ENCODE measurements at regions of chr2 and their contacts with region 1.

Region 1: DNA sequence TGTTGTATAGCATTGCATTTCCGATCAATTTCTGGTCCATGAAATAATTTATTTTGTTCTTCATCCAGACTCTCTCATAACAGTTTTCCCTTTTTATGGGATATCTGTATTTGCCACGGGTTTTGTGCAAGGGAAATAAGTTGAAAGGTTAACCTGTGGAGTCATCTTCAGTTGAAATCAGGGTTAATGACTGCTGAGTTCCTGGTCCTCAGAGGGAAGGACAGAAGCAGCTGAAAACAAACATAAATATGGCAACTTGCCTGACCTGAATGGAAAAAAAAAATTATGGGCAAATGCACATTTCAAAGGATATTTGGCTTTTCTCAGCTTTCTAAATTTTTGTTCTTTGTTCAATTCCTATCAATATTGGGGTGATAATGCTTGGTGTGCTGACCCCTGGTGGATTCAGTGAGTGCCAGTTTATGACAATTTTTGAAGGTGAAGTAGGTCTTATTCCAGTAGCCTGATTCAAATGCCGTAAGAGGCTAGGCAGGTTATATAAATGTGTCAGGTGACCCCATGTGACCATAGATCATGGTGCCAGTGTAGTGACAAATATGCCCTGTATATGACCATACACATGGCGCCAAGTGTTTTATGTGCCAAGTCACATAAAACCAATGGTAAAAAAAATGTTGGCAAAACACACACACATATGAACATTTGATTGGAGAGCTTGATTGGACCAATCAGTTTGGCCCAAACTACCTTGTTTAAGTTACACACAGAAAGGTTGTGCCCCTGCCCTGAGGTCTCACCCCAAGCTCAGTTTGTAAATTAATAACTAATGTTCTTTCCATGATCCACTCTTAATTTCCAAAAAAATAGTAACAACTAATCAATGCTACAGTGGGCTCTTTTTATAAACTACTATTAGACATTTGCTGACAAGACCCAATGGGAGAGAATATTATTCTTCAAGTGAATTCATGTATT is 47.6 kb upstream of the FAM124B start:
- DNase-seq: peak; percentile 57 to 79 (median 75)
- H3K4me3 ChIP-seq: no peak overlapping the region
- H3K27ac ChIP-seq: no peak overlapping the region
- H3K4me1 ChIP-seq: no peaks in the 10 kb centered on the region
- H3K27me3 ChIP-seq: no peaks in the 10 kb centered on the region

Region 2: GRCh38 chr2:224357098-224357901 is 92.2 kb before region 1 on chr2:
- CTCF ChIA-PET with region 1: interaction called, 41 read pairs
- POLR2A ChIA-PET with region 1: no interaction called
- DNase-seq: peak; percentile 77 to 90 (median 82)
- H3K4me3 ChIP-seq: no peak overlapping the region
- H3K27ac ChIP-seq: no peak overlapping the region
- H3K4me1 ChIP-seq: no peaks in the 10 kb centered on the region
- H3K27me3 ChIP-seq: peaks cover 0 to 2% (median 0%) of the 10 kb centered on the region in 5 experiments

Region 3: DNA sequence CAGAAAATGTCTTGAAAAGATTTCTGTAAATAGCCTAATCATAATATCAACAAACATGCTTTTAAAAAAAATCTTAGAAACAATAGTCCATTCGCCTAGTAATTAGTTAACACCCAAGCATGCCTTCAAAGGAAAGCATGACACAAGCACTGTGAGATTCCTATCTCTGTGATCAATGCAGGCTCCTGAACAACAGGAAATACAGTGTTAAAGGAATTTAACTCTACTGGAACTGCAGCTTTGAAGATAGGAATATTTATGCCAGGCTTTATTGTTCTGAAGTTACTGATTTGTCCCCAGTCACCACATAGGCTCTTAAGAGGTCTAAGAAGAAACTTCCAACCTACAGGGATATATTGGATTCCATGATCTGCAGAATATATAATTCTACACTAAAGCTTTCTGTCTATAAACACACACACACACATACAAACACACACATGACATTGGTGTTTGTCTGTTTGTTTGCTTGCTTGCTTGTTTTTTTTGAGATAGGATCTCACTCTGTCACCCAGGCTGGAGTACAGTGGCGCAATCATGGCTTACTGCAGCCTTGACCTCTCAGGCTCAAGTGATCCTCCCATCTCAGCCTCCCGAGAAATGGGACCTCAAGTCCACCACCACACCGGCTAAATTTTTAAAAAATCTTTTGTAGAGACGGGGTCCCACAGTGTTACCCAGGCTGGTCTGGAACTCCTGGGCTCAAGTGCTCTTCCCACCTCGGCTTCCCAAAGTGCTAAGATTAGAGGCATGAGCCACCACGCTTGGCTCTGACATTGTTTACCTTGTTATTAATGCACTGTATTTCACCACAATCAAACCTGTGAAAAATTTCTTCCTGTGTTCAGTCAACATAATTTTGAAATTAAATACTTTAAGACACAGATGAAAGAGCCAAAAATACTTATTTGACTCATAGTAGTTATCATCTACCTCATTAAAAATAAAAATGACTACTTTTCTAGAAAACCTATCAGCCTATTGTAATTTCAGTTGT is 31.8 kb before region 1 on chr2:
- CTCF ChIA-PET with region 1: interaction called, 12 read pairs
- POLR2A ChIA-PET with region 1: no interaction called
- DNase-seq: no peak
- H3K4me3 ChIP-seq: no peak overlapping the region
- H3K27ac ChIP-seq: no peak overlapping the region
- H3K4me1 ChIP-seq: peaks cover 0 to under 1% (median 0%) of the 10 kb centered on the region in 4 experiments
- H3K27me3 ChIP-seq: no peaks in the 10 kb centered on the region

Measured in common myeloid progenitor, CD34-positive (primary cell).